HEK293 (cell line): ENCODE measurements at regions of chr6 and their contacts with region 1.

Region 1: GRCh38 chr6:41367700-41368099 is 32.3 kb downstream of the NCR2 start:
- H3K4me3 ChIP-seq: no peak overlapping the region
- H3K27ac ChIP-seq: no peak overlapping the region
- H3K4me1 ChIP-seq: no peaks in the 10 kb centered on the region
- CTCF ChIP-seq: peak; percentile 90

Region 2: GRCh38 chr6:41318654-41319565 is 48.8 kb before region 1 on chr6:
- CTCF ChIA-PET with region 1: interaction called, 17 read pairs
- POLR2A ChIA-PET with region 1: no interaction called
- H3K4me3 ChIP-seq: peak overlapping the region; percentile 26
- H3K27ac ChIP-seq: no peak overlapping the region
- H3K4me1 ChIP-seq: peaks cover 9% of the 10 kb centered on the region
- CTCF ChIP-seq: peak; percentile 97

Region 3: GRCh38 chr6:41392246-41392645 is 24.5 kb after region 1 on chr6:
- CTCF ChIA-PET with region 1: interaction called, 17 read pairs
- POLR2A ChIA-PET with region 1: no interaction called
- H3K4me3 ChIP-seq: no peak overlapping the region
- H3K27ac ChIP-seq: no peak overlapping the region
- H3K4me1 ChIP-seq: no peaks in the 10 kb centered on the region
- CTCF ChIP-seq: no peak

Region 4: GRCh38 chr6:41455818-41456217 is 88.1 kb after region 1 on chr6:
- CTCF ChIA-PET with region 1: interaction called, 51 read pairs
- POLR2A ChIA-PET with region 1: no interaction called
- H3K4me3 ChIP-seq: no peak overlapping the region
- H3K27ac ChIP-seq: peak overlapping the region; percentile 79
- H3K4me1 ChIP-seq: peaks cover 25% of the 10 kb centered on the region
- CTCF ChIP-seq: no peak

Region 5: GRCh38 chr6:41602864-41603608 is 235.3 kb after region 1 on chr6:
- CTCF ChIA-PET with region 1: interaction called, 122 read pairs
- POLR2A ChIA-PET with region 1: interaction called, 5 read pairs
- H3K4me3 ChIP-seq: peak overlapping the region; percentile 12
- H3K27ac ChIP-seq: no peak overlapping the region
- H3K4me1 ChIP-seq: no peaks in the 10 kb centered on the region
- CTCF ChIP-seq: peak; percentile 87

Region 6: GRCh38 chr6:41675176-41675770 is 307.6 kb after region 1 on chr6:
- CTCF ChIA-PET with region 1: interaction called, 118 read pairs
- POLR2A ChIA-PET with region 1: no interaction called
- H3K4me3 ChIP-seq: no peak overlapping the region
- H3K27ac ChIP-seq: no peak overlapping the region
- H3K4me1 ChIP-seq: no peaks in the 10 kb centered on the region
- CTCF ChIP-seq: no peak

Region 7: GRCh38 chr6:41787219-41787917 is 419.7 kb after region 1 on chr6 and contains the start of gene TOMM6:
- CTCF ChIA-PET with region 1: interaction called, 24 read pairs
- POLR2A ChIA-PET with region 1: interaction called, 4 read pairs
- H3K4me3 ChIP-seq: peak within 1 kb of the TSS; percentile 67
- H3K27ac ChIP-seq: peak within 1 kb of the TSS; percentile 67
- H3K4me1 ChIP-seq: no peaks in the 10 kb centered on the region; the same call in 1 of the 2 replicates
- CTCF ChIP-seq: peak; percentile 98